ENCODE measurements at regions of chr12 and their contacts with region 1.

Region 1: DNA sequence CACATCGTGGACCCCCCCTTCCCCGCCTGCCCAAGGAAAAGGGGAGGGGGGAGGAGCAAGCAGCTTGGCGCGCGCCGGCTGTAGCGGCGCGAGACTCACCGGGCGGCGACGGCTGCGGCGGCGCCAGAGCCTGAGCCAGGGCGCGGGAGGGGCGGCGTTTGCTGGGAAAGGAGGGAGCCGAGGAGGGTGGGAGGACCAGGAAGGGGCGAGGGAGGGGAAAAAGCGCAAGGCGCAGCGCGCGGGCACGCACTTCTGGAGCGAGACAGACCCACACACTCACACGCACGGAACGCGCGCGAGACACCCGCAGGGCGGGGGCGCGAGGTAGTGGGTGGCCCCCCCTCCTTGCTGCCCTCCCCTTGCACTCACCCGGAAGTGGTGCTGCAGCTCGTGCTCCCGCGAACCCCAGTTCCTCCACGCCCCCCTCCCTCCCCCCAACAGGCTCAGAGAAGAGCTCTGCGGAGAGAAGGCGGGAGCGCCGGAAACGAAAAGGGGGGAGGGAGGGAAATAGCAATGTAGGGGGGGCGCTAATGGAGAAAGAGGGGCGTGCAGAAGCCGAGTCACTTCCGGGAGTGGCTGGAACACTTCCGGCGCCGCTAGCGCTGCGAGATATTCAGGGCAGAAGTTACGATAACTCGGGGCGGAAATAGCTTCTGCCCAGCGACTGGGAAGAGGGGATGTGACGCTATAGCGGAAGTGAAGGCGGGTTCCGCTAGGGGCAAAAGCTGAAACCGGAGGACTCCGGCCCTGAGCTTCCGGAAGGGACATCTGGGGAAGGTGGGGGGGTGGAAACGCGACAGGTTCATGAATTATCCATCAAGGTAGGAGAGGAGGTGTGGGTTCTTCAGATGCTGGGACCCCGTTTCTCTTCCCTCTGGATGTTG is at the start of gene ZNF384:
- DNase-seq: peak; percentile 89 to 99 (median 96)
- ATAC-seq: peak; percentile 78
- H3K4me3 ChIP-seq: peak within 1 kb of the TSS; percentile 60 to 77
- H3K4me3 Mint-ChIP-seq: peak within 1 kb of the TSS; percentile 94
- H3K27ac ChIP-seq: peak within 1 kb of the TSS; percentile 89 to 91
- H3K27ac Mint-ChIP-seq: peak within 1 kb of the TSS; percentile 98
- H3K4me1 ChIP-seq: peaks cover 33% of the 10 kb centered on the region
- H3K4me1 Mint-ChIP-seq: peaks cover 55% of the 10 kb centered on the region
- H3K27me3 ChIP-seq: no peaks in the 10 kb centered on the region
- H3K27me3 Mint-ChIP-seq: no peaks in the 10 kb centered on the region
- CTCF ChIP-seq: no peak
- total RNA-seq, gene ZNF384: 61.8 to 63.8 TPM

Region 2: GRCh38 chr12:6423267-6424007 is 265.8 kb before region 1 on chr12:
- CTCF ChIA-PET with region 1: no interaction called
- POLR2A ChIA-PET with region 1: no interaction called
- intact Hi-C with region 1: no loop called
- DNase-seq: peak; percentile 53 to 94 (median 74)
- ATAC-seq: peak; percentile 63
- H3K4me3 ChIP-seq: no peak overlapping the region
- H3K4me3 Mint-ChIP-seq: no peak overlapping the region
- H3K27ac ChIP-seq: peak overlapping the region in 1 of 2 experiments; percentile 37
- H3K27ac Mint-ChIP-seq: peak overlapping the region; percentile 65
- H3K4me1 ChIP-seq: peaks cover 40% of the 10 kb centered on the region
- H3K4me1 Mint-ChIP-seq: peaks cover 41% of the 10 kb centered on the region
- H3K27me3 ChIP-seq: no peaks in the 10 kb centered on the region
- H3K27me3 Mint-ChIP-seq: no peaks in the 10 kb centered on the region
- CTCF ChIP-seq: peak; percentile 74

Region 3: DNA sequence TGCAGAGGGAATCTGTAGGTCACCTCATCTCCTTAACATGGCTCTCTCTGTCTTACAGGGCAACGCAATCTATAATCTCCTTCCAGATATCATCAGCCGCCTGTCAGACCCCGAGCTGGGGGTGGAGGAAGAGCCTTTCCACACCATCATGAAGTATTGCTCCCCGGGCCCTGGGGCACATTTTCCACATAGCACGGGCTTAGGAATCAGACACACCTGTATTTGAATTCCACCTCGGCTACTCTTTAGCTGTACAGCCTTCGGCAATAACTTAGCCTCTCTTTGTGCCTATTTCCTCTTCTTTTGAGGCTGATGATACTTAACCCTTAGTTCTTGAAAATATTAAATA is 160.4 kb before region 1 on chr12:
- CTCF ChIA-PET with region 1: no interaction called
- POLR2A ChIA-PET with region 1: no interaction called
- intact Hi-C with region 1: no loop called
- DNase-seq: no peak
- ATAC-seq: no peak
- H3K4me3 ChIP-seq: no peak overlapping the region
- H3K4me3 Mint-ChIP-seq: no peak overlapping the region
- H3K27ac ChIP-seq: no peak overlapping the region
- H3K27ac Mint-ChIP-seq: peak overlapping the region; percentile 27
- H3K4me1 ChIP-seq: peaks cover 19% of the 10 kb centered on the region
- H3K4me1 Mint-ChIP-seq: peaks cover 20% of the 10 kb centered on the region
- H3K27me3 ChIP-seq: no peaks in the 10 kb centered on the region
- H3K27me3 Mint-ChIP-seq: no peaks in the 10 kb centered on the region
- CTCF ChIP-seq: no peak

Region 4: DNA sequence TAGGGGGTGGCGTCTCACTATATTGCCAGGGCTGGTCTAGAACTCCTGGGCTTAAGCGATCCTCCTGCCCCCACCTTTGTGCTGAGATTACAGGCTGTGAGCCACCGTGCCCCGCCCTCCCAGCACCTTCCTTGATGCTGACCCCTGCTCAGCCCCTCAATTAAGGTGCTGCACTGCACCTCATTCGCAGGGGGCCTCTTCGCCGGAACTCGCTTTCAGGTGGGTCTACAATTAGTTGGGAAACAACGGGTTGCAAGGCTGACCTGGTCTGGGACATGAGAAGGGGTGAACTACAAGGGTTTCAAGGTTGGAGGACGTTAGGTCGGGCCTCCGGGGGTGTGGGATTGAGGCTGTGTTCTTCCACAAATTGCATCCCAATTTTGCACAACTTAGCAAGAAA is 119.9 kb before region 1 on chr12:
- CTCF ChIA-PET with region 1: interaction called, 4 read pairs
- POLR2A ChIA-PET with region 1: interaction called, 6 read pairs
- intact Hi-C with region 1: loop called (anchors 1 to 2 kb)
- DNase-seq: no peak
- ATAC-seq: no peak
- H3K4me3 ChIP-seq: no peak overlapping the region
- H3K4me3 Mint-ChIP-seq: peak overlapping the region; percentile 65
- H3K27ac ChIP-seq: peak overlapping the region in 1 of 2 experiments; percentile 88
- H3K27ac Mint-ChIP-seq: peak overlapping the region; percentile 99
- H3K4me1 ChIP-seq: peaks cover 15% of the 10 kb centered on the region
- H3K4me1 Mint-ChIP-seq: peaks cover 46% of the 10 kb centered on the region
- H3K27me3 ChIP-seq: no peaks in the 10 kb centered on the region
- H3K27me3 Mint-ChIP-seq: no peaks in the 10 kb centered on the region
- CTCF ChIP-seq: no peak

Region 5: DNA sequence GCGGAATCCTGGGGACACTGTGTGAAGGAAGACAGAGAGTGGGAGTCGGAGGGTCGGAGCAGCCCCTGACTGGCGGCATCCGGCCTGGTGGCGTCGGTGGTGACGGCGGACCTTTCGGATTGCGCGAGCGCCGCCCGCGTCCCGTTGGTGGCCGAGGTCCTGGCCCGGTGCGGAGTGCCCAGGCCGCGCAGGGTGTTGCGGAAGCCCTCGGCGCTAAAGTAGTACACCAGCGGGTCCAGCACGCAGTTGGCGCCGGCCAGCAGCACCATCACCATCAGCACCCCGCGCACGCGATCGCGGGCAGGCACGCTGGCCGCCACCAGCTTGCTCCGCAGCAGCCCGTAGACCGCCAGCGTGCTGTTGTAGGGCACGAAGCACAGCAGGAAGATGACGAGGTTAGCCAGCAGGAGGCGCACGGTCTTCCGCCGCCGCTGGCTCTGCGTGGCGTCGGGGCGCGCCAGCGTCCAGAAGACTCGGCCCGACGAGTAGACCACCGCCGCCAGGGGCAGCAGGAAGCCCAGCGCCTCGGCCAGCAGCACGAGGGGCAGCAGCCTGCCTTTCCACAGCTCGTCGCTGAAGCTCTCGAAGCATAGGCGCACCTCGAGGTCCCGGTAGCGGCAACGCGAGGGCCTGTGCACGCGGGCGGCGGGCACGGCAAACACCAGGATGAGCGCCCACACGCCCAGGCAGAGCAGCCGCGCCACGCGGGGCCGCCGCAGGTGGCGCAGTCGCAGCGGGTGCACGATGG is 68.9 kb before region 1 on chr12:
- CTCF ChIA-PET with region 1: interaction called, 10 read pairs
- POLR2A ChIA-PET with region 1: interaction called, 5 read pairs
- intact Hi-C with region 1: loop called (anchors 1 to 2 kb)
- DNase-seq: peak in 7 of 9 experiments; percentile 21 to 78 (median 59)
- ATAC-seq: peak; percentile 72
- H3K4me3 ChIP-seq: peak overlapping the region; percentile 15 to 35
- H3K4me3 Mint-ChIP-seq: peak overlapping the region; percentile 73
- H3K27ac ChIP-seq: no peak overlapping the region
- H3K27ac Mint-ChIP-seq: peak overlapping the region; percentile 92
- H3K4me1 ChIP-seq: peaks cover 11% of the 10 kb centered on the region
- H3K4me1 Mint-ChIP-seq: peaks cover 39% of the 10 kb centered on the region
- H3K27me3 ChIP-seq: no peaks in the 10 kb centered on the region
- H3K27me3 Mint-ChIP-seq: no peaks in the 10 kb centered on the region
- CTCF ChIP-seq: peak; percentile 69

Region 6: DNA sequence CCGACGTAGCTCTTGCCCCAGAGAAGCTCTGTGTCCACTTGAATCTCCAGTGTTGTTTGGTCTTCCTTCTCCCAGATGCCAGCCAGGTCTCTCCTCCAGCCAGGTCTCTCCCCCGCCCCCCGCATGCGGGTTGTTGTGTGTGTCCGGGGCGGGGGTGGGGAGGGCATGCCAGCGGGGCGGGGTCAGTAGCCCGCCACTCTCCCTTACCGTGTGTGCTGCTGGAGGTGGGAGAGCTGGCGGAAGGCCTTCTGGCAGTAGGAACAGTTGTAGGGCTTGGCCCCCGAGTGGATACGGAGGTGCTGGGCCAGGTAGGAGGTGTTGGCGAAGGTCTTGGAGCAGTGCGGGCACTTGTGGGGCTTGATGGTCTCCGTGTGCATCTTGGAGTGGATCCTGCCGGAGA is 17.1 kb before region 1 on chr12:
- CTCF ChIA-PET with region 1: interaction called, 10 read pairs
- POLR2A ChIA-PET with region 1: interaction called, 7 read pairs
- intact Hi-C with region 1: no loop called
- DNase-seq: no peak
- ATAC-seq: no peak
- H3K4me3 ChIP-seq: no peak overlapping the region
- H3K4me3 Mint-ChIP-seq: no peak overlapping the region
- H3K27ac ChIP-seq: no peak overlapping the region
- H3K27ac Mint-ChIP-seq: no peak overlapping the region
- H3K4me1 ChIP-seq: no peaks in the 10 kb centered on the region
- H3K4me1 Mint-ChIP-seq: no peaks in the 10 kb centered on the region
- H3K27me3 ChIP-seq: no peaks in the 10 kb centered on the region
- H3K27me3 Mint-ChIP-seq: no peaks in the 10 kb centered on the region
- CTCF ChIP-seq: no peak

Region 7: DNA sequence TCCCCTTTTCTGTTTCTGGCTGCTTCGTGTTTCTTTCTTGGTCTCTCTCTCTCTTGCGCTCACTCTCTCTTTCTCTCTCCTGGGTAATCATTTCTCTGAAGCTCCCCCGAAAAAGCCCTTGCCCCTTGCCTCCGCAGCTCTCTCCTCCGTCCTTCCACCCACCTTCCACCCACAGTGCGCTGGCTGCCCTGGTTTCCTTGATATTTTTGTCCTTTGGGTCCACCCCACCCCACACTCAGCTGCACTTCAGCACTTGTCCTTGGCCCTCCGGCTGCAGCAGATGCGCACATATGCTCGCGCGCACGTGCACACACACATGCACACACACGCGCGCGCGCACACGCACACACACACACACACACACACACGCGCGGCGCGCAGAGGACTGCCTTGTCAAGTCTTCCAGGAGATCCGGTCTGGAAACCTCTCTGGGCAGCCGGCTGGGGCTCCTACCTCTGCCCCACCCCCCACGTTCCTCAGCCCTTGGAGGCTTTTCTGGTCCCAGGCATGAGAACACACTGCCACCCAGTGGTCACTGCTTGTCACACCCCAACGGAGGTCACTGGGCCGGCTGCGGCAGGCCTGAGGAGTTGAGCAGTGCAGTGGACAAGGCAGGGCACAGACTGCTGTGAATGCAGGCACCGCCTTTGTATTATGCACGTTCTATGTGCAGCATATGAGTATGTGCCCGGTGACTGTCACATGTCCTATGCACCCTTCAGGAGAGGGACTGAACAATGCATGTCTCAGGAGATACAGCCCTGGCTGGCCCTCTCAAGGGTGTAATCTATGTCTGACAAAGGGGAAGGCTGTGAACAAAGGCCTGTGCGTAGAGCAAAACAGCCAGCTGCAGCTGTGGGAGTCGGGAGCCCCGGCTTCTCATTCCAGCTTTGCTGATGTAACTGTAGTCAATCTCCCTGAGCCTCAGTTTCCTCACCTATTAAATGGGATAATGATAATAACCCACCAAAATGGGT is 89.6 kb after region 1 on chr12:
- CTCF ChIA-PET with region 1: no interaction called
- POLR2A ChIA-PET with region 1: interaction called, 4 read pairs
- intact Hi-C with region 1: loop called in 1 of 2 experiments (anchors 2 kb)
- DNase-seq: peak; percentile 80 to 92 (median 88)
- ATAC-seq: peak; percentile 72
- H3K4me3 ChIP-seq: peak overlapping the region; percentile 40 to 64
- H3K4me3 Mint-ChIP-seq: peak overlapping the region; percentile 85
- H3K27ac ChIP-seq: peak overlapping the region in 1 of 2 experiments; percentile 8
- H3K27ac Mint-ChIP-seq: peak overlapping the region; percentile 71
- H3K4me1 ChIP-seq: peaks cover 20% of the 10 kb centered on the region
- H3K4me1 Mint-ChIP-seq: peaks cover 27% of the 10 kb centered on the region
- H3K27me3 ChIP-seq: no peaks in the 10 kb centered on the region
- H3K27me3 Mint-ChIP-seq: peaks cover 12% of the 10 kb centered on the region
- CTCF ChIP-seq: peak; percentile 94

Region 8: DNA sequence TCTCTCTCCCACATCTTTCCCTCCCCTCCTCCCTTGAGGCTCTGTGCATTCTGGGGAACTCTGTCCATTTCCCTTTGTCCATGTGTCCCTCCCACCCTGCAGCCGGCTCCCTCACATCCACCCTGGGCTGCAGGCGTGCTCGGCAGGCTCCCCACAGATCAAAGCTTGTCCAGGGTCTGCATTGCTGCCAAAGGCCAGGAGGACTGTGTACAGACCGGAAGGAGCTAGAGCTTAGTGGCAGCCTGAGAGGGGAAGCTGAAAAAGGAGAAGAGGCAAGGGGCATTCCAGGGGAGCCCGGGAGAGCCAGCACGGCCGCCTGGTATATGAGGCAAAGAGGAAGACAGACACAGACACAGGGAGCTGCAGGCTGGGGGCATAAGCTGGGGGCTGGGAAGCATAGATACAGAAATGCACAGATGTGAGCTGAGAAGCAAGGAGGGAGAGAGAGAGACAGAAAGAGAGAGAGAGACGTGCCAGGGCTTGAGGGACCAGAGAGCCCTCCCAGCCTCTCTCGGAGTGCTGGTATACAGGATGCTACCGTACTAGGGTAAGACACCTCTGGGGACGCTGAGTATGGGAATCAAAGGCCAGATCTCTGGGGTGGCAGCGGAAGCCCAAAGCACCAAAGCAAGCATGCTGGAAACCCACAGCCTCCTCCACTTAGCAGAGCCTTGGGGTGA is 103.4 kb after region 1 on chr12:
- CTCF ChIA-PET with region 1: no interaction called
- POLR2A ChIA-PET with region 1: no interaction called
- intact Hi-C with region 1: no loop called
- DNase-seq: peak in 8 of 9 experiments; percentile 18 to 70 (median 43)
- ATAC-seq: peak; percentile 93
- H3K4me3 ChIP-seq: peak overlapping the region in 1 of 2 experiments; percentile 25
- H3K4me3 Mint-ChIP-seq: peak overlapping the region; percentile 42
- H3K27ac ChIP-seq: no peak overlapping the region
- H3K27ac Mint-ChIP-seq: peak overlapping the region; percentile 22
- H3K4me1 ChIP-seq: peaks cover 27% of the 10 kb centered on the region
- H3K4me1 Mint-ChIP-seq: peaks cover 33% of the 10 kb centered on the region
- H3K27me3 ChIP-seq: no peaks in the 10 kb centered on the region
- H3K27me3 Mint-ChIP-seq: peaks cover 4% of the 10 kb centered on the region
- CTCF ChIP-seq: no peak

Region 9: GRCh38 chr12:6965026-6965661 is 275.9 kb after region 1 on chr12:
- CTCF ChIA-PET with region 1: no interaction called
- POLR2A ChIA-PET with region 1: interaction called, 4 read pairs
- intact Hi-C with region 1: loop called in 1 of 2 experiments (anchors 1 kb)
- DNase-seq: peak; percentile 74 to 93 (median 88)
- ATAC-seq: peak; percentile 45
- H3K4me3 ChIP-seq: no peak overlapping the region
- H3K4me3 Mint-ChIP-seq: no peak overlapping the region
- H3K27ac ChIP-seq: peak overlapping the region; percentile 20 to 74
- H3K27ac Mint-ChIP-seq: peak overlapping the region; percentile 83
- H3K4me1 ChIP-seq: peaks cover 56% of the 10 kb centered on the region
- H3K4me1 Mint-ChIP-seq: peaks cover 54% of the 10 kb centered on the region
- H3K27me3 ChIP-seq: no peaks in the 10 kb centered on the region
- H3K27me3 Mint-ChIP-seq: no peaks in the 10 kb centered on the region
- CTCF ChIP-seq: peak; percentile 78

Measured in CD8-positive, alpha-beta T cell (primary cell).